Heart right ventricle (tissue), 16 donors: ENCODE measurements at regions of chr7 and their contacts with region 1.

Region 1: GRCh38 chr7:155609185-155609584 is 35.3 kb upstream of the RBM33 start:
- DNase-seq: no peak
- ATAC-seq: no peak
- H3K4me3 ChIP-seq: no peak overlapping the region
- H3K27ac ChIP-seq: no peak overlapping the region
- H3K4me1 ChIP-seq: no peaks in the 10 kb centered on the region
- H3K27me3 ChIP-seq: peaks cover 0 to 4% (median 0%) of the 10 kb centered on the region in 7 donors
- CTCF ChIP-seq: no peak

Region 2: GRCh38 chr7:155584763-155585531 is 24.2 kb before region 1 on chr7:
- intact Hi-C with region 1: no loop called
- DNase-seq: no peak
- ATAC-seq: peak in 5 of 8 donors; percentile 42 to 86 (median 62)
- H3K4me3 ChIP-seq: no peak overlapping the region
- H3K27ac ChIP-seq: no peak overlapping the region
- H3K4me1 ChIP-seq: peaks cover 0 to 3% (median 0%) of the 10 kb centered on the region in 9 donors
- H3K27me3 ChIP-seq: peaks cover 0 to 44% (median 18%) of the 10 kb centered on the region in 7 donors
- CTCF ChIP-seq: no peak

Region 3: DNA sequence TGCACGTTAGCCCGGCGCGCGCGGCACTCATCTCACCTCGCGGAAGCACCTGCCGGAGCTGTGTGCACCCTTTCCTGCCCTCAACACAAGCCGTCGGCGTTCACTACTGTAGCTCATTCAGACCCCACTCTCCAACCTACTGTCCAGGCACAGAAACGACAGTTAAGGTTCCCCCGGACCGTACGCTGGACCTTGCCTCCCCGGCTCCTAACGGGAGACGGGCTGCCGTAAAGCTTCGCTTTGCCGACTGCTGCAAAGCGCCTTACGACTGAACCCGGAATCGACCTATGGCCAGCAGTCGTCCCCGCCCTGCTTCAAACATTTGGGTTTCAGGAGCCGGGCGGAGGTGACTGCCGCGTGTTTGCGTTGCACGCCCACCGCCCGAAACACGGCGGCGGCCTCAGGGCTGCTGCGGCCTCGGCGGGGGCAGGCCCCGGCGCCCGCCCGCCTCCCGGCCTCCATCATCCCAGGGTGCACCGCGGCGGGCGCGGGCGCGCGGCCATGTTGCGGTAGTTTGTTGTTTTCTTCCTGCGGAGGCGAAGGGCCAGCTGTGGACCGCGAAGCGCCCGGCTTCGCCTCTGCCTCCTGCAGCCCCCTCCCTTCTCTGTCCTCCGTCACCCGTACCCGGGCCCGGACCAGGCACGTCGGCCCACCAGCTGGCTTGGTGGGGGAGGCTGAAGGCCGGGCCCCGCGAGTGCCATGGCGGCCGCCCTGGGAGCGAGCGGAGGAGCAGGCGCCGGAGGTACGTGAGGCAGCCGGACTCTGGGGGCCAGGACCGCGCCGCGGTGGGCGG is 35.2 kb after region 1 on chr7 and contains the start of gene RBM33:
- intact Hi-C with region 1: loop called in 1 of 10 experiments (anchors 5 kb)
- DNase-seq: peak; percentile 75
- ATAC-seq: peak; percentile 92 to 96 (median 94)
- H3K4me3 ChIP-seq: peak within 1 kb of the TSS; percentile 74 to 99 (median 93)
- H3K27ac ChIP-seq: peak within 1 kb of the TSS; percentile 80 to 99 (median 95)
- H3K4me1 ChIP-seq: peaks cover 0 to 35% (median 27%) of the 10 kb centered on the region in 9 donors
- H3K27me3 ChIP-seq: no peaks in the 10 kb centered on the region
- CTCF ChIP-seq: no peak
- total RNA-seq, gene RBM33: 30.5 to 44.6 (median 36.0) TPM